Endothelial cell of umbilical vein (primary cell): ENCODE measurements at regions of chr17 and their contacts with region 1.

Region 1: GRCh38 chr17:34361478-34362061 is 1.5 kb downstream of the CCL1 start:
- DNase-seq: peak; percentile 93
- H3K4me3 ChIP-seq: no peak overlapping the region
- H3K27ac ChIP-seq: no peak overlapping the region
- H3K4me1 ChIP-seq: peaks cover 7% of the 10 kb centered on the region
- H3K27me3 ChIP-seq: peaks cover 0 to 2% of the 10 kb centered on the region in 2 experiments
- CTCF ChIP-seq: peak; percentile 99 to 100
- POLR2A ChIP-seq: no peak

Region 2: GRCh38 chr17:34081269-34081668 is 280.3 kb before region 1 on chr17:
- CTCF ChIA-PET with region 1: interaction called, 10 read pairs
- POLR2A ChIA-PET with region 1: no interaction called
- dilution Hi-C with region 1: no loop called
- intact Hi-C with region 1: no loop called
- DNase-seq: no peak
- H3K4me3 ChIP-seq: no peak overlapping the region
- H3K27ac ChIP-seq: no peak overlapping the region
- H3K4me1 ChIP-seq: no peaks in the 10 kb centered on the region
- H3K27me3 ChIP-seq: no peaks in the 10 kb centered on the region
- CTCF ChIP-seq: peak; percentile 12 to 29
- POLR2A ChIP-seq: no peak

Region 3: DNA sequence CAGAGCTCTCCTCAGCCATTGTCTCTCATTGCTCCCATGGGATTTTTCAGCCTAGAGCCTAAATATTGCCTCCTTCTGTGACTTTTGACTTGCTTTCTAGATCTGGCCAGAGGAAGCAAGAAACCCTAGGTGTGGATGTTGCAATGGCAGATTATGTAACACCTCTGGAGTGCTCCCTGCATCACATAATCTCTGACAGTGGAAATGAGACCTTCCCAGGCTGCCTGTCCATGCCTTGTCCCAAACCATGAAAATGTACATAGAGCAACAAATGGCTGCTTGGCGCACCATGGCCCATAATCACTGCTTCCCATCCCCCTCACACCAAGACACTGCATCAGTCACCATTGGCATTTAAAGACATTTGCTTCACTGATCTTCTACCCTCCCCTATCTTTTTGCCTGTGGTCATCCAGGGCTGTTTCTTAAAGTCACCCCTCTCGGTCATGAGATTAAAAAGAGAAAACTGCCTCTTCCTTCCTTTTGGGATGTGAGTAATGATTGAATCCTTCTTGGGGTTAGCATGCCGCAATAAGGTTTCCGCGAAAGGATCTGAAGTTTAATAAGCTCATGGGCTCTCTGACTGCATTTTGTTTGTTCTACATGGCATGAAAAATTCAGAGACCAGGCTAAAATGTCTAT is 140.7 kb before region 1 on chr17:
- CTCF ChIA-PET with region 1: interaction called, 12 read pairs
- POLR2A ChIA-PET with region 1: no interaction called
- dilution Hi-C with region 1: no loop called
- intact Hi-C with region 1: no loop called
- DNase-seq: no peak
- H3K4me3 ChIP-seq: no peak overlapping the region
- H3K27ac ChIP-seq: no peak overlapping the region
- H3K4me1 ChIP-seq: peaks cover 4% of the 10 kb centered on the region
- H3K27me3 ChIP-seq: peaks cover 12% of the 10 kb centered on the region in 2 experiments
- CTCF ChIP-seq: no peak
- POLR2A ChIP-seq: no peak

Region 4: DNA sequence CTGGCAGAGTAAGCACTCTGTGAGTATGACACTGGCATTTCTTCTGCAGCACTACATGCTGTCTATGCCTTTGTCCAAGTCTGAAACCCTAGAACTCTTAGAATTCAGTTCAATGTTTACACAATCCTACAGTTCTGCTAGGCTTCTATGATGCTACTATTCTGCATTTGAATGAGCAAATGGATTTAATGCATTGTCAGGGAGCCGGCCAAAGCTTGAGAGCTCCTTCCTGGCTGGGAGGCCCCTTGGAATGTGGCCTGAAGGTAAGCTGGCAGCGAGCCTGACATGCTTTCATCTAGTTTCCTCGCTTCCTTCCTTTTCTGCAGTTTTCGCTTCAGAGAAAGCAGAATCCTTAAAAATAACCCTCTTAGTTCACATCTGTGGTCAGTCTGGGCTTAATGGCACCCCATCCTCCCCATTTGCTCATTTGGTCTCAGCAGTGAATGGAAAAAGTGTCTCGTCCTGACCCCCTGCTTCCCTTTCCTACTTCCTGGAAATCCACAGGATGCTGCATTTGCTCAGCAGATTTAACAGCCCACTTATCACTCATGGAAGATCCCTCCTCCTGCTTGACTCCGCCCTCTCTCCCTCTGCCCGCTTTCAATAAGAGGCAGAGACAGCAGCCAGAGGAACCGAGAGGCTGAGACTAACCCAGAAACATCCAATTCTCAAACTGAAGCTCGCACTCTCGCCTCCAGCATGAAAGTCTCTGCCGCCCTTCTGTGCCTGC is 106.8 kb before region 1 on chr17 and contains the start of gene CCL2:
- CTCF ChIA-PET with region 1: interaction called, 27 read pairs
- POLR2A ChIA-PET with region 1: no interaction called
- dilution Hi-C with region 1: no loop called
- intact Hi-C with region 1: loop called (anchors 1 kb)
- DNase-seq: peak; percentile 92
- H3K4me3 ChIP-seq: peak within 1 kb of the TSS in 2 of 3 experiments; percentile 43 to 46
- H3K27ac ChIP-seq: peak within 1 kb of the TSS; percentile 96
- H3K4me1 ChIP-seq: peaks cover 78% of the 10 kb centered on the region
- H3K27me3 ChIP-seq: no peaks in the 10 kb centered on the region
- CTCF ChIP-seq: no peak
- POLR2A ChIP-seq: no peak
- total RNA-seq, gene CCL2: 160 and 238 TPM in 2 replicates

Region 5: DNA sequence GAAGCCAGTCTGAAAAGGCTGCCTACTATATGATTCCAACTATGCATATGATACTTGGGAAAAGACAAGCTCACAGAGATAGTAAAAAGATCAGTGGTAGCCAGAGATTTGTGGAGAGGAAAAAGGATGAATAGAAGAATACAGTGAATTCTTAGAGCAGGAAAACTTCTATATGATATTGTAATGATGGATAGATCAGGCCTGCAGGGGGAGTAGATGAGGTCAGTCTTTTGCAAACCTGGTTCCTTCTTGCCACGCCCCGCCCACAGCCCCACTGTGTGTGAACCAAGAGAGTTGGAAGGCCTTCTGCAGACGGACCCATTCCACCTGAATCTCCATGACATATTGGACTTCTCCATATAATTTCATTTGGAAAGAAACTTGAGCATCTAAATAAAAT is 43.1 kb before region 1 on chr17:
- CTCF ChIA-PET with region 1: interaction called, 12 read pairs
- POLR2A ChIA-PET with region 1: no interaction called
- dilution Hi-C with region 1: no loop called
- intact Hi-C with region 1: no loop called
- DNase-seq: no peak
- H3K4me3 ChIP-seq: no peak overlapping the region
- H3K27ac ChIP-seq: no peak overlapping the region
- H3K4me1 ChIP-seq: no peaks in the 10 kb centered on the region
- H3K27me3 ChIP-seq: peaks cover 8 to 15% of the 10 kb centered on the region in 2 experiments
- CTCF ChIP-seq: no peak
- POLR2A ChIP-seq: no peak

Region 6: DNA sequence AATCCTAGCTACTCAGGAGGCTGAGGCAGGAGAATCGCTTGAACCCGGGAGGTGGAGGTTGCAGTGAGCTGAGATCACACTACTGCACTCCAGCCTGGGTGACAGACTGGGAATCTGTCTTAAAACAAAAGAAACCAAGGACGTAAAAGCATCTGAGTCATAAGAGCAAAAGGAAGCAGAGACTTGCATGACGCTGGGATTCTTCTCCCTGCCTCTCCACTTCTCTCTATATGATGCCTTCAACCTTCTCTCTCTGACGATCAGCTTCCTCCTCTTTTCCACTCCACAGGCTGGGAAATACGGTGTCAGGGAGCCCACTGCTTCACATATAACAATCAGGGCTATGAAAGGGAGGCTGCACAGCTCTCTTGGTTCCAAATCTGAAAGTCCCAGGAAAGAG is 44.7 kb after region 1 on chr17:
- CTCF ChIA-PET with region 1: interaction called, 10 read pairs
- POLR2A ChIA-PET with region 1: no interaction called
- dilution Hi-C with region 1: no loop called
- intact Hi-C with region 1: no loop called
- DNase-seq: no peak
- H3K4me3 ChIP-seq: no peak overlapping the region
- H3K27ac ChIP-seq: no peak overlapping the region
- H3K4me1 ChIP-seq: no peaks in the 10 kb centered on the region
- H3K27me3 ChIP-seq: peaks cover 0 to 9% of the 10 kb centered on the region in 2 experiments
- CTCF ChIP-seq: no peak
- POLR2A ChIP-seq: no peak